ENCODE measurements at regions of chr3 and their contacts with region 1.

Region 1: DNA sequence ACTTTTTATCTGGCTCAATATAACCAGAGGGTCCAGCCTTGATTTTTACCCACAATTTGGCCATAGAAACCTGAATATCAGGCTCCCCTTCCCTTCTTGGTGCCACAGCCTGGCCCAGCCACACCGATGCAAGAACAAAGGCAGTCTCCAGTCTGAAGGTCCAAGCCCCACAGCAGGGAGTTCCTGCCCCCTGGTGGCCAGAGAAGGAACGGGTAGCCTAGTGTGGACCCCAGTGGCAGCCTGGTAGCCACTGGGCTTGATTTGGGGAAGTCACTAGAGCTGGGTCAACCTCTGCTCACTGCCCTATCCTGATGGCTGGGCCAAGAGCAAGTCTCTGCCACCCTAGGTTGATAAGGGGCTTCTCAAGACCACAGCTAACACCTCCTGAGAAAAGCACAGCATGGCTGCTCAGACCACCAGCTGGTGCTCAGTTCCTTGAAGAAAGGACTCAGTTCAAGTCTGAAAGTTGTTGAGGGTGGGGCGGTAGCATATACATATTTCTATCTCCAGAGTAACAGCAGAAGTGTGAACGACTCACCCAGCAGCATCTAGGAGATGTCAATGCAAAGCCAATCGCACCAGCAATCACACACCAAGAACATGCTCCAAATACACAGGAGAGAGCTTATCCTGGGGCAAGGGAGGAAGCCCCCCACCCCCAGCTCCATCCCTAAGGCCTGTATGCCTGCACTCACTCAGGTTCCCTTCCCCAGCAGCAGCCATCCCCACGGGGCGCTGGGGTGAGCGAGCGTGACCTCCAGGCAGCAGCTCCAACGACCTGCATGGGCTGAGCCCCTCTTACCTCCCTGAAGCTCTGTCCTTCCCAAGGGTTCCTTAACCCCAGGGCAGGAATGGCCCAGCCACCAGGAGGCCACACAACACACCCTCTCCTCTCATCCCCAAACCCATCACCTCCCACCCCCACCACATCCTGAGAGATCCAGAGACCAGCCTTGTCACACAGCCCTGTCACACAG is 7.6 kb downstream of the PFKFB4 start:
- DNase-seq: peak; percentile 72 to 90 (median 81)
- ATAC-seq: peak; percentile 99
- H3K4me3 ChIP-seq: no peak overlapping the region
- H3K4me3 Mint-ChIP-seq: no peak overlapping the region
- H3K27ac ChIP-seq: no peak overlapping the region
- H3K27ac Mint-ChIP-seq: no peak overlapping the region
- H3K4me1 ChIP-seq: peaks cover 17% of the 10 kb centered on the region
- H3K4me1 Mint-ChIP-seq: peaks cover 21% of the 10 kb centered on the region
- H3K27me3 ChIP-seq: no peaks in the 10 kb centered on the region
- H3K27me3 Mint-ChIP-seq: no peaks in the 10 kb centered on the region
- CTCF ChIP-seq: peak; percentile 82

Region 2: DNA sequence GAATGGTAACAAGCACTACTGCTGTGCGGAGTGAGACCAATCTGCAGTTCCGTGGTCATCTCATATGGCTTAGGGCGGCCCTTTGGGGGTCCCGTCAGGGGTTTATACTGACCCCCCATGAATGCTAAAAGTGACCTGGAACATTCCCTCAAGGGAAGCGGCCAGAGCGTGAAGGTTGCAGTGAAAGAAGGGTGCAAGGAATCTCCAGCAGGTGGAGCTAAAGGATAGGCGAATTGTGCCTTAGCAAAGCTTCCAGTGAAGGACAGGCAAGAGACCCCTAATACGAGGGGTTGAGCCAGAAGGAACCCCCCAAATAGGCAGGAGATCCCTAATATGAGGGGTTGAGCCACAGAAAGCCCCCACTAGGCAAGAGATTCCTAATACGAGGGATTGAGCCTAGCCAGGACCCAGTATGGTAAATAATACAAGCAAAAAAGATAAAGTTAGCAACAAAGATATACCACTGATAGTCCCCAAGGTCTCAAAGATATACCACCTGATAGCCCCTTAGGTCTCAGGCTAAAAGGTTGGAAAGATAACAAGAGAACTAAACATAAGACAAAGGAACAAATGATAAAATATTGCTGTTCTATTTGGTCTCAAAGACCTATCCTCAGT is 275.3 kb before region 1 on chr3:
- CTCF ChIA-PET with region 1: interaction called, 4 read pairs
- POLR2A ChIA-PET with region 1: no interaction called
- intact Hi-C with region 1: loop called (anchors 2 kb)
- DNase-seq: peak; percentile 23 to 82 (median 42)
- ATAC-seq: peak; percentile 35
- H3K4me3 ChIP-seq: no peak overlapping the region
- H3K4me3 Mint-ChIP-seq: no peak overlapping the region
- H3K27ac ChIP-seq: no peak overlapping the region
- H3K27ac Mint-ChIP-seq: no peak overlapping the region
- H3K4me1 ChIP-seq: peaks cover 21% of the 10 kb centered on the region
- H3K4me1 Mint-ChIP-seq: peaks cover 24% of the 10 kb centered on the region
- H3K27me3 ChIP-seq: no peaks in the 10 kb centered on the region
- H3K27me3 Mint-ChIP-seq: no peaks in the 10 kb centered on the region
- CTCF ChIP-seq: peak; percentile 73

Region 3: GRCh38 chr3:48400824-48401433 is 148.1 kb before region 1 on chr3:
- CTCF ChIA-PET with region 1: interaction called, 33 read pairs
- POLR2A ChIA-PET with region 1: interaction called, 5 read pairs
- intact Hi-C with region 1: loop called (anchors 1 kb)
- DNase-seq: peak; percentile 45 to 88 (median 56)
- ATAC-seq: peak; percentile 82
- H3K4me3 ChIP-seq: no peak overlapping the region
- H3K4me3 Mint-ChIP-seq: no peak overlapping the region
- H3K27ac ChIP-seq: no peak overlapping the region
- H3K27ac Mint-ChIP-seq: no peak overlapping the region
- H3K4me1 ChIP-seq: no peaks in the 10 kb centered on the region
- H3K4me1 Mint-ChIP-seq: no peaks in the 10 kb centered on the region
- H3K27me3 ChIP-seq: no peaks in the 10 kb centered on the region
- H3K27me3 Mint-ChIP-seq: peaks cover 1% of the 10 kb centered on the region
- CTCF ChIP-seq: peak; percentile 93

Region 4: DNA sequence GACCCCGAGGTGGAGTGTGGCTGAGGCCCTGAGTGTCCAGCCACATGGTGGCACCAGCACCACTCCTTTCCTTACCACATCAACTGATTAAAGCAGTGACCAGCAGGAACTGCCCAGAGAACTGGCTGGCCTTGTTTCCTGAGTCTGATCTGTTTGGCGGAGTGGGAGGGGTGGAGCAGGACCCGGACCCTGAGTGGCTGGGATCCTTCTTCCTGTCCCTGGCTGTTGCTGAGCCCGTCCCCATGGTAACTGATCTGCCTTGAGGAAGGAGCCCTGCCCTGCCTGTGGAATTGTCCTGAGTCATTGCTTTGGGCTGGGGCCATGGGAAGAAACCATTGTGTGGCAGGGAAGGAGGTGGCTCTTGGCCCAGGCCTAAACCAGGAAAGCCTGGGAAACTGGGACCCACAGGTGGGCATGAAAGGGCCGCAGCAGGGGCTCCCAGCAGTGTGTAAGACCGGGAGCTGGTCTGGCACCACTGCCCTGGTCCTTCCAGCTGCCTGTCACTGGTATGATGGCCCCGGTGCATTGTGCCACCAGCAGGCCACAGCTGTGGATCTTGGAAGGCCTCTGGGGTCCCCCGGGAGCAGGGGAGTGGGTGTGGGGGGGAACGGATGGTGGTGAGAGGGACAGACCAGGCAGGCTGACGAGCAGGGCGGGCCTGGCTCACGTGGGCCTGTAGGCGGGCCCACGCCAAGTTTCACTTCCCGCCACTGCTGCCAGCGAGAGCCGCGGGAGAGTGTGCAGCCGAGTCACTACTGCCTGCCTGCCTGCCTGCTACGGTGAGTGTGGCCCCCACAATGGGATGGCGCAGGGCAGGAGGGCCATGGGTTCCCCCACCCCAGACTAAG is 83.3 kb before region 1 on chr3:
- CTCF ChIA-PET with region 1: no interaction called
- POLR2A ChIA-PET with region 1: no interaction called
- intact Hi-C with region 1: loop called in 1 of 2 experiments (anchors 2 kb)
- DNase-seq: peak; percentile 62 to 89 (median 76)
- ATAC-seq: peak; percentile 96
- H3K4me3 ChIP-seq: peak overlapping the region; percentile 72
- H3K4me3 Mint-ChIP-seq: peak overlapping the region; percentile 87
- H3K27ac ChIP-seq: peak overlapping the region; percentile 94
- H3K27ac Mint-ChIP-seq: peak overlapping the region; percentile 94
- H3K4me1 ChIP-seq: peaks cover 66% of the 10 kb centered on the region
- H3K4me1 Mint-ChIP-seq: peaks cover 53% of the 10 kb centered on the region
- H3K27me3 ChIP-seq: no peaks in the 10 kb centered on the region
- H3K27me3 Mint-ChIP-seq: no peaks in the 10 kb centered on the region
- CTCF ChIP-seq: no peak

Region 5: GRCh38 chr3:48472915-48473616 is 76.0 kb before region 1 on chr3:
- CTCF ChIA-PET with region 1: interaction called, 10 read pairs
- POLR2A ChIA-PET with region 1: interaction called, 4 read pairs
- intact Hi-C with region 1: no loop called
- DNase-seq: peak; percentile 86 to 99 (median 94)
- ATAC-seq: peak; percentile 87
- H3K4me3 ChIP-seq: peak overlapping the region; percentile 63
- H3K4me3 Mint-ChIP-seq: peak overlapping the region; percentile 89
- H3K27ac ChIP-seq: peak overlapping the region; percentile 92 to 97
- H3K27ac Mint-ChIP-seq: peak overlapping the region; percentile 94
- H3K4me1 ChIP-seq: peaks cover 94% of the 10 kb centered on the region
- H3K4me1 Mint-ChIP-seq: peaks cover 48% of the 10 kb centered on the region
- H3K27me3 ChIP-seq: no peaks in the 10 kb centered on the region
- H3K27me3 Mint-ChIP-seq: no peaks in the 10 kb centered on the region
- CTCF ChIP-seq: peak; percentile 28

Measured in CD4-positive, alpha-beta T cell (primary cell).